ENCODE measurements at regions of chr16 and their contacts with region 1.

Region 1: GRCh38 chr16:86680162-86680561 is 101.8 kb downstream of the FOXL1 start:
- DNase-seq: no peak
- ATAC-seq: peak; percentile 69

Region 2: GRCh38 chr16:86570558-86571529 is 109.3 kb before region 1 on chr16:
- intact Hi-C with region 1: loop called (anchors 5 kb)
- DNase-seq: no peak
- ATAC-seq: no peak

Measured in Right ventricle myocardium inferior (tissue), 1 donor.